ENCODE measurements at regions of chr7 and their contacts with region 1.

Region 1: DNA sequence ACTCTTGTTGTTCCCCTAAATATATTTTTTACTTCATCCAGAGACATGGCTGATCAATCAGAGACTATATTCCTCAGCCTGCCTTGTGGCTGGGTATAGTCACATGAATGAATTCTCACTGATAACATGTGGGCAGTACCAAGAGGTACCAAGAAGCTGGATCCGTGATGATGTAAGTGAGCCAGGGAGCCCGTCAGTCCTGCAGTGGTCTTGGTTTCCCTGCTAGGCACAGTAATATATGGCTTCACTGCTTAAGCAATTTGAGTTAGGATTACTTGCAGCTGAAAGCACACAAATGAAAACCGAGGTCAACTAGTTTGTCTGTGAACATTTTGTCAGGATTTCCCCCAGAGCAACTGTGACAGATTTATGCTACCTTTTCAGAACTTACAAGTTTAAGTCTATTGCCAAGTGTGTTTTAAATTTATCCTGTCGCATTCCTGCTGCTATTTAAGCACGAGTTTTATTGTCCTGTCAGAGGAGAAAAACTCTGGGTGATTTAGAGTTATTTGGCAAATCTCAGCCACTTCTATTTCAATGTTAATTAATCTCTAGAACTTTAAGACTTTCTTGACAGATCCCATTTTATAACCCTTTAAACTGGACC is 381.8 kb downstream of the PHF14 start:
- DNase-seq: no peak
- ATAC-seq: no peak
- H3K4me3 Mint-ChIP-seq: no peak overlapping the region
- H3K27ac Mint-ChIP-seq: no peak overlapping the region
- H3K4me1 Mint-ChIP-seq: no peaks in the 10 kb centered on the region
- H3K27me3 Mint-ChIP-seq: peaks cover 6% of the 10 kb centered on the region
- CTCF ChIP-seq: no peak

Region 2: DNA sequence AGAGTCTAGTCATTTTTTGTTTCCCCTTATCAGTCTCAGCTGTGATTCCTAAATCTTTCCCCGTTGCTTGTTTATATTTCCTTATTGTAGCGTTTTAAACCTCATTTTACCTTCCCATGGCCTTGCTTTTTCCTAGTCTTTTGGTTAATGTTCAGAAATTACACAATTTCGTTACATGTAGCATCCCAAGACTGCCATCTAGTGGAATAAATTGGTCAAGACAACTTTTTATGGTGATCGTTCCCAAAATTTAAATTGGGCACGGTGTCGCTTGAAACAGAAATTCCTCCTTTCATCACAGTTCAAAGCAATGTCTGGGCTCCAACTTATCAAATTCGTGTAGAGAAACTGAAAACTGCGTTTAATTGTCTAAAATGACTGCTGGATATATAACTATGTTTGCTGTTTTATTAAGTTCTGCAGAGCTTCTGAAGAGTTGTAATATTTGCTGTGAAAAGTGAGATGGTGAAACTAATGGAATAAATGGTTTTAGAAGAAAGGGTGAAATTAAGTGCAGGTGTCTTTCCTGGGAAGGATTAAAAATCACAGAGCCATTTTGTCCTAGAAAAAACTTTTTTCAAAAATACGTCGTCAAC is 11.6 kb before region 1 on chr7:
- CTCF ChIA-PET with region 1: interaction called, 10 read pairs
- POLR2A ChIA-PET with region 1: no interaction called
- intact Hi-C with region 1: no loop called
- DNase-seq: no peak
- ATAC-seq: no peak
- H3K4me3 Mint-ChIP-seq: no peak overlapping the region
- H3K27ac Mint-ChIP-seq: no peak overlapping the region
- H3K4me1 Mint-ChIP-seq: peaks cover 4% of the 10 kb centered on the region
- H3K27me3 Mint-ChIP-seq: peaks cover 10% of the 10 kb centered on the region
- CTCF ChIP-seq: peak; percentile 73